Activated CD4-positive, alpha-beta T cell treated with anti-CD3 and anti-CD28 coated beads for 36 hours (primary cell): ENCODE measurements at regions of chr12 and their contacts with region 1.

Region 1: GRCh38 chr12:14257734-14258574 is 107.5 kb upstream of the ATF7IP start:
- DNase-seq: peak; percentile 95
- ATAC-seq: peak; percentile 78
- H3K4me3 Mint-ChIP-seq: peak overlapping the region; percentile 66
- H3K27ac Mint-ChIP-seq: peak overlapping the region; percentile 99
- H3K4me1 Mint-ChIP-seq: peaks cover 48% of the 10 kb centered on the region
- H3K27me3 Mint-ChIP-seq: no peaks in the 10 kb centered on the region

Region 2: GRCh38 chr12:14199455-14200198 is 58.3 kb before region 1 on chr12:
- CTCF ChIA-PET with region 1: no interaction called
- POLR2A ChIA-PET with region 1: no interaction called
- intact Hi-C with region 1: no loop called
- DNase-seq: no peak
- ATAC-seq: no peak
- H3K4me3 Mint-ChIP-seq: no peak overlapping the region
- H3K27ac Mint-ChIP-seq: no peak overlapping the region
- H3K4me1 Mint-ChIP-seq: no peaks in the 10 kb centered on the region
- H3K27me3 Mint-ChIP-seq: no peaks in the 10 kb centered on the region

Region 3: GRCh38 chr12:14216405-14217294 is 41.3 kb before region 1 on chr12:
- CTCF ChIA-PET with region 1: interaction called, 6 read pairs
- POLR2A ChIA-PET with region 1: no interaction called
- intact Hi-C with region 1: loop called (anchors 1 kb)
- DNase-seq: no peak
- ATAC-seq: peak; percentile 50
- H3K4me3 Mint-ChIP-seq: peak overlapping the region; percentile 21
- H3K27ac Mint-ChIP-seq: peak overlapping the region; percentile 80
- H3K4me1 Mint-ChIP-seq: peaks cover 27% of the 10 kb centered on the region
- H3K27me3 Mint-ChIP-seq: no peaks in the 10 kb centered on the region

Region 4: DNA sequence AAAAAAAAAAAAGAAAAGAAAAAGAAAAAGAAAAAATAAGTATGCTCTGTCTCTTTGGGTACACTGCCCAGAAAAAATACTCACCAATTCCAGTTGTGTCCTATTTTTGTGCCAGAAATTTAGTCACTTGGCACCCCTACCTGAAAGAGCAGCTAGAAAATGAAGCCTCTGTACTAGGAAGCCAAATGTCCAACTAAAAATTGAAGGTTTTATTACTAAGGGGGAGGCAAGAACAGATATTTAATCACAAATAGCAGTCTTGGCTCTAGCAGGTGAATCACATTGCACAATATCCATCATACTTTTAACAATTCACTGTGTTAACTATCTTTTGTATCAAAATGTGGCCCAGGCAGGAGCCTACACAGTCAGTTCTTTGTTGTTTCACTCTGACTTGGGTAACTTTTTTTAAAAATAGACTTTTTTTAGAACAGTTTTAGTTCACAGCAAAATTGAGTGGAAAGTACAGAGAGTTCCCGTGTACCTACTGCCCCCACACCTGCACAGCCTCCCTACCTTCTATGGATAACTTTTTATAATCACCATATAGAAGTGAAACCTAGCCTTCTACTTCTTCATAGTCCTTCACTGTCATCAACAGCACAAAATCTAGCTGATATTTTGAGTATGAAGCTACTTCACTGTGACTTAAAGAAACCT is 20.5 kb after region 1 on chr12:
- CTCF ChIA-PET with region 1: interaction called, 4 read pairs
- POLR2A ChIA-PET with region 1: no interaction called
- intact Hi-C with region 1: loop called in 1 of 2 experiments (anchors 2 kb)
- DNase-seq: no peak
- ATAC-seq: peak; percentile 23
- H3K4me3 Mint-ChIP-seq: no peak overlapping the region
- H3K27ac Mint-ChIP-seq: no peak overlapping the region
- H3K4me1 Mint-ChIP-seq: peaks cover 12% of the 10 kb centered on the region
- H3K27me3 Mint-ChIP-seq: no peaks in the 10 kb centered on the region

Region 5: DNA sequence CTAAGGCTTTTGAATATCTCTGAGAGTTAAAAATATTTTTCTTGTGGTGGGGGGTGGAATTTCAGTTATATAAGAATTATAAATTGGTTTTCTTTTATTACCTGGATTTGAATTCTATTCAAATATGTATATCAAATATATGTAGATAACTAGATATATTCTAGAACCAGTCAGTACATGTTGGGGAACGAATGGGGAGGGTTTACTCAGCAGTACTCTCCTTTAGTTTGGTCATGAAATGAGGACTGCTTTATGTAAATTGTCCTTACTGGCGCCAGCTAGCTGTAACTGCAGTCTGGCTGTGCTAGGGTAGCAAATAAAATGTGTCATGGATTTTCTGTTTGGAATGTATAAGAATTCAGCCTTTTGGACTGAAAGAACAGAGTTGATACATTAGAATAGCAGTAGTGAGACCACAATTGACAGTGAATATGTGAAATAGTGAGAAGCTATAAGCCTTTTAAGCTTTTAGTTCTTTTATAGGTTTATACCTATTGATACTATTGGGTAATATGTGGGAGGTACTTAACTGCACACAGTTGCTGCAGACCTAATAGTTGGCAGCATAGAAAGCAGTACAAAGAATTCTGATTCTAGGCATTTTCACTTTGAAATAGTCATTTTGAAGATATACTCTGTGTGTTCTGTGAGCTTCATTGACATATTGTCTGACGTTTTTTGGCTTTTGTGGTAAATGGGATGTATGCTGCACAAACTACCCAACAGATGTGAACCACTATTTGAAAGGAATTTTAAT is 136.5 kb after region 1 on chr12:
- CTCF ChIA-PET with region 1: interaction called, 16 read pairs
- POLR2A ChIA-PET with region 1: interaction called, 10 read pairs
- intact Hi-C with region 1: loop called (anchors 1 kb)
- DNase-seq: peak; percentile 66
- ATAC-seq: peak; percentile 82
- H3K4me3 Mint-ChIP-seq: peak overlapping the region; percentile 71
- H3K27ac Mint-ChIP-seq: peak overlapping the region; percentile 96
- H3K4me1 Mint-ChIP-seq: peaks cover 78% of the 10 kb centered on the region
- H3K27me3 Mint-ChIP-seq: no peaks in the 10 kb centered on the region

Region 6: DNA sequence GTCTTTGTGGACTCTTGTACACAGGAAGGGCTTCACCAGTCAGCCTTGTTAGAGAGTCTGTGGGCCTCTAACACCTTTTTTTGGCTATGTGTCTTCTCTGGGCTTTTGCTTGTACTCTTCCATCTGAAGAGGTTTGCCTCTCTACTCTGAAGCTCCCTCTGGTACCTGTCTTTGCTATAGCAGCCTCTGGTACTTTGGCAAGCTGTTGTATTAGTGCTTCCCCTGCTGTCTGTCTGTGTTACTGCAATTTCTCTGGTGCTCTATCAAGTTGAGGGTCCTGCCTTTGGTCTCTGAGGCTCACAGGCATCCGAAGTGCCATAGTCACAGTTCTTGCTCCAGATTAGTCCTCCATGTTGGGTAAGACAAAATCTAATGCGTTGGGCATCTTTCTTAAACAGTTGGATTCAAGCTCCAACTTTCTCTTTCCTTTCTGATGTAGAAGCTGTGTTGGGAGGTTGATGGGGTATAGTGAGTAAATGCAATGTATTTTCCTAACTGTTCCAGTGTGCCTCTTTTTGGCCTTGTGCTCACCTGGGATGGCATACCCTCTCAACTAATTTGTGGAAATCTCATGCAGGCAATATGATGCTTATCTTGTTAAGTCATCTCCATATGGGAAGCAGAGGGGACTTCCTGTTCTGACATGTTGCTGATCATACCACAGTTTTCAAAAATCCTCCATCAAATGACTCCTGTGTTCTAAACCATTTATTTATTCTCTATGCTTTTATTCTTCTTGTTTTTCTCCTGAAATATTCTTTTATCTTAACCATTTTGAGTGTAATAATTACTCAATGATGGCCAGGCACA is 196.3 kb after region 1 on chr12:
- CTCF ChIA-PET with region 1: interaction called, 6 read pairs
- POLR2A ChIA-PET with region 1: no interaction called
- intact Hi-C with region 1: loop called (anchors 1 kb)
- DNase-seq: peak; percentile 42
- ATAC-seq: peak; percentile 92
- H3K4me3 Mint-ChIP-seq: no peak overlapping the region
- H3K27ac Mint-ChIP-seq: peak overlapping the region; percentile 78
- H3K4me1 Mint-ChIP-seq: peaks cover 46% of the 10 kb centered on the region
- H3K27me3 Mint-ChIP-seq: no peaks in the 10 kb centered on the region

Region 7: GRCh38 chr12:14960548-14961465 is 702.9 kb after region 1 on chr12:
- CTCF ChIA-PET with region 1: no interaction called
- POLR2A ChIA-PET with region 1: no interaction called
- intact Hi-C with region 1: loop called in 1 of 2 experiments (anchors 2 kb)
- DNase-seq: peak; percentile 56
- ATAC-seq: peak; percentile 53
- H3K4me3 Mint-ChIP-seq: peak overlapping the region; percentile 96
- H3K27ac Mint-ChIP-seq: peak overlapping the region; percentile 99
- H3K4me1 Mint-ChIP-seq: peaks cover 55% of the 10 kb centered on the region
- H3K27me3 Mint-ChIP-seq: no peaks in the 10 kb centered on the region